ENCODE measurements at regions of chr11 and their contacts with region 1.

Region 1: DNA sequence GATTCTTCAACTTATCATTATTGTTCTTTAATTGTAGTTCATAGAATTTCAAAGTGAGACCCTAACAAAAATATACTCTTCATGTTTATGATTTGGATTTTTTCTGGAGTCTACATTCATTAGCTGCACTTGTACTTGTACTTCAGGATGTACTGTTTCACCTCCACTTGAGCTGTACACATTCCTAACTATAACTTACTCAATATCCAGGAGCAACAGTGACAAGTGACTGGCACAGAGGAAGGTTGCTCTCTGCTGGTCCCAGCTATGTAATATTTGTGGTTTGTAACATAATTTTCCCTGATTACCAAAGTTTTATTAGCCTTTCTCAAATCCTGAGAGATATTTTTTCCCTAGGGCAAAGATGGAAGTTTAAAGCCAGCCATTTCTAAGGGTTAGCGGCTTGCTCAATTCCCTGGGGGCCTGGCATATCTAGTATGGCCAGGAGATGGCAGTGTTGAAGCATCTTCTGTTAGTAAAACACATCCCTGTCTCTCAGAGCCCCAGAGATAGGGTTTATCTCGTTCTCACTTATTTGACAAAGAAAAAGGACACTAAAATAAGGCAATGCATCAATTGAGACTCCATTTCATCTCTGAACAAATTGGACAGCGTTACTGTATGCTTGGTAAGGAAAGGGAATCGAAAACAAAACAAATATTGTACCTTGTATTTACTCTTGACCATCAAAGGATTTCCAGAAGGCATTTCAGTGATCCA is 14.2 kb downstream of the OR52A5 start:
- H3K4me3 ChIP-seq: no peak overlapping the region
- H3K27ac ChIP-seq: no peak overlapping the region
- H3K4me1 ChIP-seq: no peaks in the 10 kb centered on the region
- CTCF ChIP-seq: peak; percentile 42; the same call in 1 of the 2 replicates

Region 2: DNA sequence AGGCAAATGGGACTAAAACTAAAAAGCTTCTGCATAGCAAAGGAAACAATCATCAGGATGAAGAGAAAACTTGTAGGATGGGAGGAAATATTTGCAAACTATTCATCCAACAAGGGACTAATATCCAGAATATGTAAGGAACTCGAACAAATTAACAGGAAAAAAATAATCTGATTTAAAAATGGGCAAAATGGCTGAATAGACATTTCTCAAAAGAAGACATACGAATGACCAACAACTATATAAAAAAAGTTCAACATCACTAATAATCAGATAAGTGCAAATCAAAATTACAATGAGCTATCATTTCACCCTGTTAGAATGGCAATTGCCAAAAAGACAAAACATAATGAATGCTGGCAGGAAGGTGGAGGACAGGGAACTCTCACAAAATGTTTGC is 42.6 kb before region 1 on chr11:
- CTCF ChIA-PET with region 1: no interaction called
- POLR2A ChIA-PET with region 1: no interaction called
- H3K4me3 ChIP-seq: no peak overlapping the region
- H3K27ac ChIP-seq: no peak overlapping the region
- H3K4me1 ChIP-seq: no peaks in the 10 kb centered on the region
- CTCF ChIP-seq: no peak

Region 3: DNA sequence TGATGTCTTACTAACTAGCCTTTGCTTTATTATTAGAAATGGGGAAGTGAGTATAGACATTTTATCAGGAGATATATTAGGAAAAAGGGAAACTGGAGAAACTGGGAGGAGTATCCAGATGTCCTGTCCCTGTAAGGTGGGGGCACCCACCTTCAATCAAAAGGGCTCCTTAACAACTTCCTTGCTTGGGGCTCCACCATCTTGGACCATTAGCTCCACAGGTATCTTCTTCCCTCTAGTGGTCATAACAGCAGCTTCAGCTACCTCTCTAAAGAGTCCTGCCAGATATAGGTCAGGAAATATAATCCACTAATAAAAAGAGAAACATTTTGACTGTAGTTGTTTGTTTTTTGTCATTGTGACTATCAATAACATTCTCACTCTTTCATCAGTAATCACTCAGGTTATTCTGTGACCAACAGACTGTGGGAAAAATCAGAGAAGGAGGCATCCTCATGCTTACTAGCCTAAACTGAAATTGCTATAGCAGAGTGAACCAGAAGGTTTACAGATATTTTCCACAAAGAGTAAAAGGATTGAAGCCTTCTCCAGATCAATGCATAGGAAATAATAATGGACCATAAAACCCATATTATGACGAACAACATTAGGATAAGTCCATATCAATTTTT is 167.4 kb after region 1 on chr11:
- CTCF ChIA-PET with region 1: interaction called, 10 read pairs
- POLR2A ChIA-PET with region 1: no interaction called
- H3K4me3 ChIP-seq: no peak overlapping the region
- H3K27ac ChIP-seq: no peak overlapping the region
- H3K4me1 ChIP-seq: no peaks in the 10 kb centered on the region
- CTCF ChIP-seq: no peak

Region 4: GRCh38 chr11:5380740-5381342 is 256.9 kb after region 1 on chr11:
- CTCF ChIA-PET with region 1: interaction called, 10 read pairs
- POLR2A ChIA-PET with region 1: no interaction called
- H3K4me3 ChIP-seq: no peak overlapping the region
- H3K27ac ChIP-seq: no peak overlapping the region
- H3K4me1 ChIP-seq: no peaks in the 10 kb centered on the region
- CTCF ChIP-seq: no peak